K562 (cell line): ENCODE measurements at regions of chr2 and their contacts with region 1.

Region 1: DNA sequence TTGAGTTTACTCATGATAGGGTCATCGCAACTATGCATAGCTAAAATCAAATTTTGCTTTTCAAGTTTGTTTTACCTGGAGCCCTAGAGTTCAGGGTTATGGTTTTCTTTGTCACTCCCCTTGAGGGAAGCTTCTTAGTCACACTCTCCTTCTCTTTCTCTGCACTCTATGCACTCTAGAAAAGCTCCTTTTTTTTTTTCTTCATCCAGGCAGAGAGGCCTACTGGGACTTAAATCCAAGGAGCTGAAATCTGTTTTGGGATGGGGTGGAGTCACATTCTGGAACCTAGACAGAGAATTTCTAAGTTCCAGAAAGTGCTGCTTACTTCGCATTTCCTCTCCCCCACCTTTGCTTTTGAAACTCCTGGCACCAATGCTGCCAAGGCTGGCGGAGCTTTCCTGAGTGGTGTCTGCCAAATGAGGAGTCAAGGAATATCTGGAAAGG is 19.1 kb upstream of the IL18R1 start:
- DNase-seq: no peak
- ATAC-seq: no peak
- H3K4me3 ChIP-seq: no peak overlapping the region
- H3K27ac ChIP-seq: no peak overlapping the region
- H3K4me1 ChIP-seq: peaks cover 0 to 43% of the 10 kb centered on the region in 2 experiments; a peak in 4 of 5 replicates
- H3K27me3 ChIP-seq: no peaks in the 10 kb centered on the region
- CTCF ChIP-seq: no peak
- EP300 ChIP-seq: no peak
- POLR2A ChIP-seq: no peak
- RAD21 ChIP-seq: no peak

Region 2: GRCh38 chr2:102258386-102259074 is 78.0 kb before region 1 on chr2:
- CTCF ChIA-PET with region 1: no interaction called
- POLR2A ChIA-PET with region 1: no interaction called
- in situ Hi-C with region 1: no loop called
- intact Hi-C with region 1: loop called (anchors 5 kb)
- DNase-seq: no peak
- ATAC-seq: peak; percentile 52; the same call in 2 of the 3 replicates
- H3K4me3 ChIP-seq: no peak overlapping the region
- H3K27ac ChIP-seq: no peak overlapping the region
- H3K4me1 ChIP-seq: no peaks in the 10 kb centered on the region; a peak in 1 of 5 replicates
- H3K27me3 ChIP-seq: peaks cover 0 to 5% of the 10 kb centered on the region in 2 experiments; a peak in 1 of 5 replicates
- CTCF ChIP-seq: no peak
- EP300 ChIP-seq: peak; percentile 60
- POLR2A ChIP-seq: no peak
- RAD21 ChIP-seq: no peak; a peak in 1 of 4 replicates